Naive thymus-derived CD4-positive, alpha-beta T cell (primary cell): ENCODE measurements at regions of chr16 and their contacts with region 1.

Region 1: DNA sequence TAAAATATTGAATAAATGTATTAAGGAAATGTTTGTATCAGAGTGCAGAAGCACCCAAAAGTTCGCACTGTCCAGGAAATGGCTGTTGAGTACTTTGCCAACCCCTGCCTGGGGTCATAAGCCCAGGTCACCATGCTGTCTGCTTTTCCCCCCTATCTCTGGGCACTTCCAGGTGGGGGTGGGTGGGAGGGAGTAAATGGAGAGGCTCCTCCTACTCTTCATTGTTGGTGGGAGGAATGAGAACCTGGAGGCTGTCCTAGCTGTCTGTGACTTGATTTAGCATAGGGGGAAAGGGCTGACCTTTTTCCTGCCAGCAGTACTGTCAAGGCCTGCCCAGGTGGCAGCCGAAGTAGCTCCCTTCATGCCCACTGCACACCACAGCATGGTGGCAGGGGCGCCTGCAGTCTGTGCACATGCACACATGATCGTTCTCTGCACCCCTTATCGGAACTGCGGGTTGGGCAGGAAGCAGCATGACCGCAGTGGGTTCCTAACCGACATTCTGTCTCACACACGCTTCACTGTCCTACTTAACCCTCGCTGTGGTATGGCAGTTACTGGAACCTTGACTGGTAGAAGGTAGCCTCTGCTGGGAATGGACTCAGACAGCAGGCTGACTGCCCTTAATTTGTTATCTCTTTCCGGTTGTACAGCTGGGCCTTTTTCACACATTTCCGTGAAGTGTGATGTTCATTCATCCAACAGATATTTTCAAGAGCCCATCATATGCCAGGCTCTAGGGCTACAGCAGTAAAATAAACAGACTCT is 41.5 kb downstream of the LDHD start:
- DNase-seq: peak; percentile 45 to 86 (median 77)
- ATAC-seq: peak; percentile 97
- H3K4me3 ChIP-seq: peak overlapping the region; percentile 37
- H3K4me3 Mint-ChIP-seq: peak overlapping the region; percentile 58 to 83 (median 76)
- H3K27ac ChIP-seq: peak overlapping the region; percentile 36
- H3K27ac Mint-ChIP-seq: peak overlapping the region; percentile 84 to 100 (median 89)
- H3K4me1 ChIP-seq: peaks cover 16 to 38% of the 10 kb centered on the region in 2 donors
- H3K4me1 Mint-ChIP-seq: peaks cover 42 to 76% (median 64%) of the 10 kb centered on the region in 7 donors
- H3K27me3 ChIP-seq: no peaks in the 10 kb centered on the region
- H3K27me3 Mint-ChIP-seq: peaks cover 0 to 4% (median 0%) of the 10 kb centered on the region in 5 donors

Region 2: DNA sequence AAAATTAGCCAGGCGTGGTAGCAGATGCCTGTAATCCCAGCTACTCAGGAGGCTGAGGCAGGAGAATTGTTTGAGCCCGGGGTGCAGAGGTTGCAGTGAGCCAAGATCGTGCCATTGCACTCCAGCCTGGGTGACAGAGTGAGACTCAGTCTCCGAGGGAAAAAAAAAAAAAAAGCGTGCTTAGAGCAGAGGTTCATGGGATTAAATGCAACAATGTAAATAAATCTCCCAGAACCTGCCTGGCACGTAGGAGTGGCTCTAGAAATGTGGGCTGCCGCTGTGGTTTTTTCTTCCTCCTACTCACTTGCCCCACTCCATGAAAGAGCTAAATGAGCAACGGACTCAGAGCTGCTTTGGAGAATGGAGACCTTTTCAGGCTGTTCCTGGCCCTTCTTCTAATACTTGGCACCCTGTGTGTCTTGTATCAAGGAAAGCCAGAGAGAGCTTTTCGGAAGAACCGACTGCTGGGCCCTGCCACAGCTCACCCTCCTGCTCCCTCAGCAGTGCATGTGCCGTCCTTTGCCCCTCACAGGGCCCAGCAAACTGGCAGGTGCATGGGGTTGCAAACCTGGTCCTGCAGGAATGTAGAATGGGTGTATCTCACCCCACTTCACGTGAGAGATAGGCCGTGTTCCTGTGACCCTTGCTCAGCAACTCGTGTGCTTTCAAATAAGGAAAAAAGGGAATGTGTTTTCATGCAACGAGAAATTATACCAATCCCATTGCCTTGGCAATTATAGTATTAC is 10.5 kb before region 1 on chr16:
- CTCF ChIA-PET with region 1: interaction called, 3 read pairs
- POLR2A ChIA-PET with region 1: interaction called, 5 read pairs
- intact Hi-C with region 1: loop called (anchors 1 kb)
- DNase-seq: peak in 6 of 9 donors; percentile 10 to 35 (median 20)
- ATAC-seq: peak; percentile 57
- H3K4me3 ChIP-seq: peak overlapping the region; percentile 45
- H3K4me3 Mint-ChIP-seq: peak overlapping the region; percentile 64 to 91 (median 79)
- H3K27ac ChIP-seq: peak overlapping the region; percentile 41
- H3K27ac Mint-ChIP-seq: peak overlapping the region; percentile 83 to 93 (median 89)
- H3K4me1 ChIP-seq: peaks cover 5 to 20% of the 10 kb centered on the region in 2 donors
- H3K4me1 Mint-ChIP-seq: peaks cover 17 to 73% (median 45%) of the 10 kb centered on the region in 7 donors
- H3K27me3 ChIP-seq: no peaks in the 10 kb centered on the region
- H3K27me3 Mint-ChIP-seq: no peaks in the 10 kb centered on the region

Region 3: DNA sequence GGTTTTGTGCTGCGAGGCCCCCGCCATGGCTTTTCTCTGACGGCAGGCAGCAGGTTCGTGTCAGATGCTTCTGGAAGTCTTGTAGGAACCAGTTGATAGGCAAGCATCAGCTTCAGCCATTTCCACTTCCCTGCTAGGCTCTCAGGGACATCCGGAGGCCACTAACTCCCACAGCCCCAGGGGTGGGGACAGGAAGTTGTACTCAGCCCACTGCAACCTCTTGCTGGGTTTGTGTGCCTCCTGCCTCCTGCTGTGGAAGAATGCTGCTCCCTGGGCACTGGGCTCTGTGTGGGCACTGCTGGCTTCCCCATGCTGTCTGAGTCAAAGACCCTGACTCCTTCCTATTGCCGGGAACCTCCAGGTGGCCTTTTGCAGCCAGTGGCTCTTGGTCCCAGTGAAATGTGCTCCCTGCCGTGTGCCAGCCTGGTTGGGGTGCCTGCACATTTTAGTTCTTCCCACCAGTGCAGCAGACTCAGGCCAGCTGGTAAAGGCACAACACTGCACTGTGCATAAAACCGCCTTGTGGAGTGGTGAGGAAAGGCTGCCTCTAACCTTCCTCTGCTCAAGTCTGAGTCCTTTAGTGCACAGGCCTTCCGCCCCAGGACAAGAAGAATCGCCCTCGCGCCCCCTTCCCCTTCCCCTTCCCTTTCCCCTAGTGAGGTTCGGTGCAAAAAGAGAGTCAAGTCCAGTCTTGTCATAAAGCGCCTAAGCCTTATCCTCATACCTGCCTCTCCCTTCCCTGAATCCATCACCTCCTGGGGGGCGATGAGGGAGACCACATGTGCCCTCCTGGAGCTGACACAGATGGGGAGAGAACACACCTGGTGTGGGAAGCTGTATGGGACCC is 24.9 kb after region 1 on chr16:
- CTCF ChIA-PET with region 1: interaction called, 7 read pairs
- POLR2A ChIA-PET with region 1: interaction called, 4 read pairs
- intact Hi-C with region 1: loop called in 1 of 2 experiments (anchors 1 kb)
- DNase-seq: peak in 5 of 9 donors; percentile 24 to 45 (median 35)
- ATAC-seq: peak; percentile 60
- H3K4me3 ChIP-seq: no peak overlapping the region
- H3K4me3 Mint-ChIP-seq: peak overlapping the region in 8 of 10 donors; percentile 33 to 72 (median 50)
- H3K27ac ChIP-seq: peak overlapping the region; percentile 50
- H3K27ac Mint-ChIP-seq: peak overlapping the region; percentile 62 to 92 (median 79)
- H3K4me1 ChIP-seq: peaks cover 29 to 33% of the 10 kb centered on the region in 2 donors
- H3K4me1 Mint-ChIP-seq: peaks cover 22 to 80% (median 37%) of the 10 kb centered on the region in 7 donors
- H3K27me3 ChIP-seq: no peaks in the 10 kb centered on the region
- H3K27me3 Mint-ChIP-seq: no peaks in the 10 kb centered on the region

Region 4: GRCh38 chr16:75486676-75487313 is 411.7 kb after region 1 on chr16:
- CTCF ChIA-PET with region 1: no interaction called
- POLR2A ChIA-PET with region 1: no interaction called
- intact Hi-C with region 1: no loop called
- DNase-seq: no peak
- ATAC-seq: no peak
- H3K4me3 ChIP-seq: no peak overlapping the region
- H3K4me3 Mint-ChIP-seq: no peak overlapping the region
- H3K27ac ChIP-seq: no peak overlapping the region
- H3K27ac Mint-ChIP-seq: no peak overlapping the region
- H3K4me1 ChIP-seq: no peaks in the 10 kb centered on the region
- H3K4me1 Mint-ChIP-seq: peaks cover 0 to 3% (median 0%) of the 10 kb centered on the region in 7 donors
- H3K27me3 ChIP-seq: no peaks in the 10 kb centered on the region
- H3K27me3 Mint-ChIP-seq: peaks cover 0 to 14% (median 7%) of the 10 kb centered on the region in 5 donors